Right ventricle myocardium inferior (tissue), 1 donor: ENCODE measurements at regions of chr9 and their contacts with region 1.

Region 1: DNA sequence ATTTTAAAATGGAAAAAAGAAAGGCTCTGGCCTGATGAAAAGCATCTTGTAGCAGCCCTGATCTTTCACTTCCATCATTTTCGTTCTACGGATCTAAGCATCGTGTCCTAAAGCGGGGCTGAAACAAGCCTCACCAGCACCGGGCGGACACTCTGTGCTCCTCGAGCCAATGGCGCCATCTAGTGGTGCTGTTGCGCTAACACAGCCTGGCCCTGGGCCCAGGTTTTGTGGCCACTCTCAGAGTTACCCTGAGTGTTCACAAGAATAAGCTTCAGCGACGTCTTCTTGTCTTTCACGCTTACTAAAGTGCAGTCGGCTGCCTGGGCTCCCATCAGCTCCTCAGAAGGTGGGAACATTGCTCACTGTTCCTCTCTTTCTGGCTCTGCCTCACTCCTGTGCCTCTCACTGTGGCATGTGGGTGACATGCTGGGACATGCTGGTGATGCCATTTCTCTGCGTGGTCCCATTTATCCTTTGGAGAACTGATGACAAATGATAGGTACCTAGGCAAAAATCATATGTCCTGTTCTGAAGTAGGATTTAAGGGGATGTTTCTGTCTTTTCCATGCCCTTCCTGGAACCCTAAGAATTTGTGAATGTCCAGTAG is 32.7 kb downstream of the DMRT3 start:
- DNase-seq: peak; percentile 87
- ATAC-seq: peak; percentile 95

Region 2: GRCh38 chr9:347667-348292 is 661.4 kb before region 1 on chr9:
- intact Hi-C with region 1: loop called (anchors 10 kb)
- DNase-seq: no peak
- ATAC-seq: peak; percentile 56

Region 3: GRCh38 chr9:385818-386398 is 623.3 kb before region 1 on chr9:
- intact Hi-C with region 1: loop called (anchors 5 kb)
- DNase-seq: no peak
- ATAC-seq: peak; percentile 93

Region 4: DNA sequence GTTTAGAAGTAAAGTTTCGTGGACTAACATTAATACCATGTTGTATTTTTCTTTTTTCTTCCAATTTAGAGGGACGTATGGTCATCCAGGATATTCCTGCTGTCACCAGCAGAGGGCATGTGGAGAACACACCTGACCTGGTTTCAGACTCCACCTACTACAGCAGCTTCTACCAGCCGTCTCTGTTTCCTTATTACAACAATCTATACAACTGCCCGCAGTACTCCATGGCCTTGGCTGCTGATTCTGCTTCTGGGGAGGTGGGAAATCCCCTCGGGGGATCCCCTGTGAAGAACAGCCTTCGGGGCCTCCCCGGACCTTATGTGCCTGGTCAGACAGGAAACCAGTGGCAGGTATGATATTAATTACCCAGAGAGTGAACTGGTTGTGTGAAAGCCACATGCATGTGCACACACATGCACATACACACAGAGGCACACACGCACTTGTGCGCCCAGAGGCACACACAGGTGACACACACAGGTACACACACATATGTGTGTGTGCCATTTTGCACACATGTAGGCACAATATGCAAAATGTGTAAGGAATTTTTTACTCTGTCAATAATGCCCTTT is 115.3 kb before region 1 on chr9:
- intact Hi-C with region 1: loop called (anchors 1 kb)
- DNase-seq: no peak
- ATAC-seq: peak; percentile 50